SK-N-SH (cell line): ENCODE measurements at regions of chr1 and their contacts with region 1.

Region 1: GRCh38 chr1:109773146-109773899 is 9.6 kb upstream of the EPS8L3 start:
- DNase-seq: peak; percentile 86
- H3K4me3 ChIP-seq: no peak overlapping the region; a peak in 1 of 4 replicates
- H3K27ac ChIP-seq: no peak overlapping the region
- H3K4me1 ChIP-seq: peaks cover 0 to 19% of the 10 kb centered on the region in 2 experiments; a peak in 1 of 4 replicates
- H3K27me3 ChIP-seq: no peaks in the 10 kb centered on the region
- CTCF ChIP-seq: peak; percentile 92
- EP300 ChIP-seq: no peak
- RAD21 ChIP-seq: peak; percentile 98

Region 2: GRCh38 chr1:109539676-109540075 is 233.6 kb before region 1 on chr1 and contains the start of gene GPR61:
- CTCF ChIA-PET with region 1: interaction called, 140 read pairs
- POLR2A ChIA-PET with region 1: no interaction called
- DNase-seq: no peak
- H3K4me3 ChIP-seq: no peak within 1 kb of the TSS
- H3K27ac ChIP-seq: no peak within 1 kb of the TSS
- H3K4me1 ChIP-seq: peaks cover 0 to 25% of the 10 kb centered on the region in 2 experiments; a peak in 1 of 4 replicates
- H3K27me3 ChIP-seq: no peaks in the 10 kb centered on the region
- CTCF ChIP-seq: no peak
- EP300 ChIP-seq: no peak
- RAD21 ChIP-seq: no peak
- polyA plus RNA-seq, gene GPR61: not detected in 2 replicates

Region 3: DNA sequence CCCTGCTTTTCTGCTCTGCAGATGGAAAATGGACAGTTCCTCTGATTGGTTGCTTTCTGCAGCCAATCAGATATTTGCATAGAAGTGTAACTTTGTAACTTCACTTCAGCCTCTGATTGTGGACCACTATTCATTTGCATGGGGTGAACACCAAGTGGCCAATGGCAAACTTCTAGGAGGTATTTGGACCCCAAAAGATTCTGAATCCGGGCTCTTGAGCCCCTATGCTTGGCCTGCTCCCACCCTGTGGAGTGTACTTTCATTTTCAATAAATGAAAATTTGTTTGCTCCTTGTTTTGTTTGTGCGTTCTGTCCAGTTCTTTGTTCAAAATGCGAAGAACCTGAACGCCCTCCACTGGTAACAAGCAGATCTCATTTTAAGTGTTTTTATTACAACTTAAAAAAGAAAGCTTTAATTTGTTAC is 123.8 kb before region 1 on chr1:
- CTCF ChIA-PET with region 1: interaction called, 92 read pairs
- POLR2A ChIA-PET with region 1: no interaction called
- DNase-seq: peak; percentile 56
- H3K4me3 ChIP-seq: peak overlapping the region; percentile 34 to 52; a peak in 3 of 4 replicates
- H3K27ac ChIP-seq: peak overlapping the region in 1 of 2 experiments; percentile 90; a peak in 2 of 4 replicates
- H3K4me1 ChIP-seq: peaks cover 7 to 30% of the 10 kb centered on the region in 2 experiments
- H3K27me3 ChIP-seq: no peaks in the 10 kb centered on the region
- CTCF ChIP-seq: peak; percentile 57
- EP300 ChIP-seq: no peak
- RAD21 ChIP-seq: peak; percentile 81

Region 4: DNA sequence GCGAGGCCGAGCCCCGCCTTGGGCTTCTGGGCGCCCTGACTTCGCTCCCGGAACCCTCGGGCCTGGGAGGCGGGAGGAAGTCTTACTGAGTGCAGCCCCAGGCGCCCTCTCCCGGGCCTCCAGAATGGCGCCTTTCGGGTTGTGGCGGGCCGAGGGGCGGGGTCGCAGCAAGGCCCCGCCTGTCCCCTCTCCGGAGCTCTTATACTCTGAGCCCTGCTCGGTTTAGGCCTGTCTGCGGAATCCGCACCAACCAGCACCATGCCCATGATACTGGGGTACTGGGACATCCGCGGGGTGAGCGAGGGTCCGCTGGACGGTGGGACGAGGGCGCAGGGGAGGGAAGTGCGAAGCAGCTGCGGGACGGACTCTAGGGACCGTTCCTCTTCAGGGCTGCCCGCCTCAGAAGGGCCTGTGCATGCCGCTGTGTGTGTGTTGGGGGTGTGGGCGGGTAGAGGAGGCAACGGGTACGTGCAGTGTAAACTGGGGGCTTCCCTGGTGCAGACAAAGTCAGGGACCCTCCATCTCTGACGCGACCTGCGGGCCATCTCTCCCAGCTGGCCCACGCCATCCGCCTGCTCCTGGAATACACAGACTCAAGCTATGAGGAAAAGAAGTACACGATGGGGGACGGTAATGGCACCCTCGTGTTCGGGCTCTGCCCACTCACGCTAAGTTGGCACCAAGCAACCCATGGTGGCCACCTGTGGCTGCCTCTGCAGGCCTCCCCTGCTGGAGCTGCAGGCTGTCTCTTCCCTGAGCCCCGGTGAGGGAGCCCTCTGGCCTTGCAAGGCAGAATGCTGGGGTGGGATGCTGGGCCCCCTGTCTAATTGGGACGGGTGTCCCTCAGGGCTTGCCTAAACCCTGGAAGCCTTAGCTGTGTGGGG is 85.5 kb before region 1 on chr1 and contains the start of gene GSTM1:
- CTCF ChIA-PET with region 1: no interaction called
- POLR2A ChIA-PET with region 1: no interaction called
- DNase-seq: no peak
- H3K4me3 ChIP-seq: no peak within 1 kb of the TSS
- H3K27ac ChIP-seq: no peak within 1 kb of the TSS
- H3K4me1 ChIP-seq: no peaks in the 10 kb centered on the region
- H3K27me3 ChIP-seq: no peaks in the 10 kb centered on the region
- CTCF ChIP-seq: no peak
- EP300 ChIP-seq: no peak
- RAD21 ChIP-seq: no peak
- polyA plus RNA-seq, gene GSTM1: not detected in 2 replicates

Region 5: DNA sequence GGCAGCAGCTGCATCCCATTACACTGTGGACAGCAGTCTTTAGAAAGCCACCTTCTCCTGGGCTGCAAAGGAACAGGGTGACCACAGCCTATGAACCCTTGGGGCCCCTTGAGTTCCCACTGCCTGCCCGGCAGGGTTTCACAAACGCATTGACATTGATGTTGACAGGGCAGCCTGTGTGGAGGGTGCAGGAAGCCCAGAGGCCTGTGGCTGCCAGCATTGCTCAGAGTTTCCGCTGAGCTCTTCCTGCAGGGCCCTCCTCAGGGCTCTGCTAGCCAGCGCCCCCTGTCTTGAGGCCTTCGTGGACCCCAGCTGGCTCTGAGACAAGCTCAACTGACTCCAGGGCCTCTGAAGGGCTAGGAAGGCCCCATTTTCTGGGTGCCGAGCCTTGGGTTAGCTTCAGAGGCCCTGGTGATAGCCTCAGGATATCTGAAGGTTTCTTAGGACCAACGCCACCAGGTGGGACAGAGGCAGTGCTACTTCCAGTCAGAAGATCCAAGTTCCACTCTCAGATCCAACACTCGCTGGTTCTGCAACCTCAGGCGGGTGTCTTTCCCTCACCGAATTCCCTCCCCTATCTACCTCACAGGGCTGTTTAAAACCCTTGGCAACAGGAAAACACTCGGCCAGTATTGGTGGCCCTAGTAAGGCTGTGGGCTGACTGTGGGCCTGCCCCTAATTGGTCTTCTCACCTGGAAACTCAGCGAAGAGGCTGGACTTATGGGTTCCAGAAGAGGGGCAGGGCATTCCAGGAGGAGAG is 17.6 kb after region 1 on chr1:
- CTCF ChIA-PET with region 1: interaction called, 147 read pairs
- POLR2A ChIA-PET with region 1: interaction called, 3 read pairs
- DNase-seq: no peak
- H3K4me3 ChIP-seq: no peak overlapping the region
- H3K27ac ChIP-seq: no peak overlapping the region
- H3K4me1 ChIP-seq: peaks cover 37 to 57% of the 10 kb centered on the region in 2 experiments
- H3K27me3 ChIP-seq: no peaks in the 10 kb centered on the region
- CTCF ChIP-seq: peak; percentile 38; the same call in 1 of the 2 replicates
- EP300 ChIP-seq: no peak
- RAD21 ChIP-seq: no peak

Region 6: GRCh38 chr1:109864047-109864822 is 90.9 kb after region 1 on chr1:
- CTCF ChIA-PET with region 1: no interaction called
- POLR2A ChIA-PET with region 1: no interaction called
- DNase-seq: no peak
- H3K4me3 ChIP-seq: no peak overlapping the region; a peak in 1 of 4 replicates
- H3K27ac ChIP-seq: no peak overlapping the region
- H3K4me1 ChIP-seq: peaks cover 0 to 3% of the 10 kb centered on the region in 2 experiments; a peak in 1 of 4 replicates
- H3K27me3 ChIP-seq: no peaks in the 10 kb centered on the region
- CTCF ChIP-seq: no peak
- EP300 ChIP-seq: no peak
- RAD21 ChIP-seq: no peak

Region 7: GRCh38 chr1:110003747-110004630 is 230.7 kb after region 1 on chr1:
- CTCF ChIA-PET with region 1: interaction called, 11 read pairs
- POLR2A ChIA-PET with region 1: interaction called, 3 read pairs
- DNase-seq: no peak
- H3K4me3 ChIP-seq: peak overlapping the region; percentile 20 to 27; a peak in 3 of 4 replicates
- H3K27ac ChIP-seq: peak overlapping the region; percentile 77 to 92
- H3K4me1 ChIP-seq: peaks cover 26 to 30% of the 10 kb centered on the region in 2 experiments; a peak in 3 of 4 replicates
- H3K27me3 ChIP-seq: no peaks in the 10 kb centered on the region
- CTCF ChIP-seq: no peak
- EP300 ChIP-seq: 0 out of 4 replicates have a peak, but pooled peaks of 1 of the 2 experiments have one; percentile 33
- RAD21 ChIP-seq: no peak